ENCODE measurements at regions of chr3 and their contacts with region 1.

Region 1: DNA sequence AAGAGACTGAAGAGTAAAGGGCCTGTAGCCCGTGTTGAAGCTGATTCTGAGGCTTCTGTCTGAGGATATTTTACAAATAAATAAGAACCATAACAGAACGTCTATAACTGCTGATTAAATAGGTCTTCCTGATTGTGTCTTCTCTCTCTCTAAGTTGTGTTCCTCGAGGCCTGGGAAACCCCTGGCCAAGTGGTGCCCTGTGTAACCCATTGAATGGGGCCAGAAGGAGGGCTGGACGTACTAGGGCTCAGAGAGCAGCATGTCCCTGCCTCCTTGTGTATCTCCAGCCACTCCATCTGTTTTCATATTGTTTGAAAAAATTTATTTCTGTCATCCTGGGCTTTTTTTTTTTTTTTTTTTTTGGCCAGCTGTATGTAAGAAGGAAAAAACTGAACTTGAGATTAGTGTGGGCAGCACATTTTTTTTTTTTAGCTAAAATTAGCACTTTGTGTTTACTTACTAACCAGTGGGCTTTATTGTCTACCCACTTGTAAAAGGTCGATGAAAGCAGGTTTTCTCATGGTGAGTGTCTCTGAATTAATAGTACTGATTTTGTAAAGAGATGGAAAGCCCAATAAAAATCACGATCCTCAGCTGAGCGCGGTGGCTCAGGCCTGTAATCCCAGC is 10.7 kb downstream of the DHX30 start:
- DNase-seq: no peak
- H3K4me3 Mint-ChIP-seq: no peak overlapping the region
- H3K27ac Mint-ChIP-seq: no peak overlapping the region
- H3K4me1 Mint-ChIP-seq: no peaks in the 10 kb centered on the region
- H3K27me3 Mint-ChIP-seq: no peaks in the 10 kb centered on the region

Region 2: GRCh38 chr3:47731061-47731460 is 82.6 kb before region 1 on chr3:
- CTCF ChIA-PET with region 1: no interaction called
- POLR2A ChIA-PET with region 1: interaction called, 11 read pairs
- DNase-seq: no peak
- H3K4me3 Mint-ChIP-seq: no peak overlapping the region
- H3K27ac Mint-ChIP-seq: no peak overlapping the region
- H3K4me1 Mint-ChIP-seq: peaks cover 7% of the 10 kb centered on the region
- H3K27me3 Mint-ChIP-seq: no peaks in the 10 kb centered on the region